Right lobe of liver (tissue), 6 donors: ENCODE measurements at regions of chr16 and their contacts with region 1.

Region 1: DNA sequence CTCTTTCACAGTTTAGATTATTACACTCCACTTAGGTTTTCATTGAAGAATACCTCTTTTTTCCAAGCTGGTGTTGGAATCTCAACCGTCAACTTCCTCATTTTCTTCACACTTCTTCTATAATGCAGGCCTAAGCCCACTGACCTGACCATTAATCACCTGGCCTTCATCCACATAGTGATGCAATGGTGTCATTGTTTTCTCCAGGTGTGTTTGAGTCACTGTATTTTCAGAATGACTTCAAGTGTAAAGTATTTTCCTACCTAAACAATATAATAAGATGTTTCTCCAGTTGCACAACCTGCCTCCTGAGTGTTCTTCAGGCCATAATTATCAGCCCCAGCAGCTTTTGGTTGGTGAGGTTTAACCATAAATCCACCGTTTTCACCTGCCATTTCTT is 1675.1 kb downstream of the TP53TG3F start:
- DNase-seq: no peak
- ATAC-seq: no peak
- H3K4me3 ChIP-seq: no peak overlapping the region
- H3K27ac ChIP-seq: no peak overlapping the region
- H3K4me1 ChIP-seq: peaks cover 0 to 2% (median 0%) of the 10 kb centered on the region in 4 donors
- H3K27me3 ChIP-seq: no peaks in the 10 kb centered on the region
- CTCF ChIP-seq: no peak
- POLR2A ChIP-seq: no peak

Region 2: GRCh38 chr16:35173295-35173694 is 38.8 kb after region 1 on chr16:
- intact Hi-C with region 1: loop called in 1 of 2 experiments (anchors 10 kb)
- DNase-seq: peak in 1 of 3 donors; percentile 18
- ATAC-seq: peak in 1 of 4 donors; percentile 21
- H3K4me3 ChIP-seq: no peak overlapping the region
- H3K27ac ChIP-seq: no peak overlapping the region
- H3K4me1 ChIP-seq: no peaks in the 10 kb centered on the region
- H3K27me3 ChIP-seq: no peaks in the 10 kb centered on the region
- CTCF ChIP-seq: no peak
- POLR2A ChIP-seq: no peak